ENCODE measurements at regions of chr5 and their contacts with region 1.

Region 1: DNA sequence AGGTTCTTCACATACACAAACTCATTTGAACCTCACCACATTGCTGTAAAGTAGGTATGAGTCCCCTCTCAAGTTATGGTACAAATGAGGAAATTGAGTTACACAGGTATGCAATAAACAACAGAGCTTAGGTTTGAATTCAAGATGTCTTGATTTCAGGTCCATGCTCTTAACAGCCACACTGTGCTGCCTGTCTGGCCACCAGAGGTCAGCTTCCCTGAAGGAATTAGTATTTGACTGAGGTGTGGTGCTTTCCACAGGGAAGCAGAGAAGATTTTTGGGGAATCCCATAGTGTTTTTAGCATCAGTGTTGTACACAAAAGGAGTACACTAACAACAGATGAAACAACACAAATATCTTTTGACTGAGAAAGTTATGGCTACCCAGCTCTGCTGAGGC is 94.4 kb upstream of the ITGA1 start:
- DNase-seq: peak; percentile 45
- ATAC-seq: peak; percentile 29; the same call in 1 of the 2 replicates
- H3K4me3 ChIP-seq: no peak overlapping the region
- H3K27ac ChIP-seq: no peak overlapping the region
- H3K4me1 ChIP-seq: peaks cover 8% of the 10 kb centered on the region
- H3K27me3 ChIP-seq: no peaks in the 10 kb centered on the region
- CTCF ChIP-seq: peak; percentile 46
- POLR2A ChIP-seq: no peak
- RAD21 ChIP-seq: peak; percentile 45

Region 2: DNA sequence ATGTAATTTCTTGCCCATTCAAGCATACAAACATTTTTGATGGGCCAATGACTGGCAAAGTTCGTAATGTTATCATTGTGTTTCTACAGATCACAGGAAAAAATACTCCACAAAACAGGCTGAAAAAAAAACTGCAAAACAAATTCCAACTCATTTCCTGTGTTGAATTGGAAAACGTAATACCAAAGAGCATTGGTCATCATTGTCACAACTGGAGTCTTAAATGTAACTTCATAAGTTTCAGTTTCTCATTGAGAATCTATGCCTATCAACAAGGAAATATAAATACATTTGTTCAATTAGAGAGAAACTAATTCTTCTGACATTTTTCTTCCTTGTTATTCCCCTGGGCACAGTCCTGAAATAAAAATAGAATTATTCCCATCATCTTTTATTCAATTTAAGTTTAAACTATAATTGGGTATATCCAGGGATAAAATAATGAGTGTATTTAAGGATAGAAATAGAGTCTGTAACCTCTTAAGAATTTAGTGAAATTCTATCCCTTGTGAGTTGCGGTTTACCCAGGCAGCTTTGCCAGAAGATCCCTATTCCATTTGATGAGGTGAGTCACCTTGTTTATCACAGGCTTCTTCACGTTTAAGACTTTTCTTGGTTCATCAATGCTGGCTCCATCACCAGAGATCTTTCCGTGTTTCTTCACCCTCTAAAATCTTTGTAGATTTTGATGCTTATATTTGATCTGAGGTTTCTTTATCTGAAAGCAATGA is 18.3 kb before region 1 on chr5:
- CTCF ChIA-PET with region 1: no interaction called
- POLR2A ChIA-PET with region 1: interaction called, 13 read pairs
- dilution Hi-C with region 1: no loop called
- in situ Hi-C with region 1: no loop called
- intact Hi-C with region 1: no loop called
- DNase-seq: peak; percentile 87
- ATAC-seq: peak; percentile 61
- H3K4me3 ChIP-seq: peak overlapping the region; percentile 1; the same call in 1 of the 2 replicates
- H3K27ac ChIP-seq: peak overlapping the region; percentile 53; the same call in 1 of the 2 replicates
- H3K4me1 ChIP-seq: peaks cover 2% of the 10 kb centered on the region; the same call in 1 of the 2 replicates
- H3K27me3 ChIP-seq: no peaks in the 10 kb centered on the region; the same call in 1 of the 2 replicates
- CTCF ChIP-seq: no peak
- POLR2A ChIP-seq: no peak
- RAD21 ChIP-seq: no peak

Region 3: GRCh38 chr5:52915176-52915875 is 222.0 kb after region 1 on chr5:
- CTCF ChIA-PET with region 1: no interaction called
- POLR2A ChIA-PET with region 1: no interaction called
- dilution Hi-C with region 1: no loop called
- in situ Hi-C with region 1: no loop called
- intact Hi-C with region 1: loop called (anchors 5 kb)
- DNase-seq: peak; percentile 75
- ATAC-seq: peak; percentile 96
- H3K4me3 ChIP-seq: peak overlapping the region; percentile 10; the same call in 1 of the 2 replicates
- H3K27ac ChIP-seq: no peak overlapping the region
- H3K4me1 ChIP-seq: no peaks in the 10 kb centered on the region; the same call in 1 of the 2 replicates
- H3K27me3 ChIP-seq: no peaks in the 10 kb centered on the region
- CTCF ChIP-seq: peak; percentile 63
- POLR2A ChIP-seq: no peak
- RAD21 ChIP-seq: peak; percentile 70